HepG2 (cell line): ENCODE measurements at regions of chr2 and their contacts with region 1.

Region 1: DNA sequence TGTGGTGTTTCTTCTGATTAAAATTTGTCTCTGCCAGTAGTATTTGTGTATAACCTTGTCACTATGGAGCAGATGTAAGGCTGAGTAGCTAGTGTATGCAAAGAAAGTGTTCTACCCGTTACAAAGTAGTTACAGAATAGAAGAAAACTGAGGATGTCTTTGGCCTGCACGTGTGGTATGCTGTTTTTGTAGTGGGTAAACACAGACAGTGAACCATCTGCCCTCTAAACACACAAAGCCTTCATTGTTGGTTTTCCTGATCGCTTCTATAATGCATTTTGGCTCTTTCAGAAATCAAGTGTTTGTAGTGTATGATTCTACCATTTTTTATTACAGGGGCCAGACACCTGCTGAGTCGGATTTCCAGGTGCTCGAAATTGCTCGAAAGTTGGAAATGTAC is 61.5 kb downstream of the FARP2 start:
- DNase-seq: peak; percentile 66
- ATAC-seq: peak; percentile 69
- H3K4me3 ChIP-seq: no peak overlapping the region
- H3K27ac ChIP-seq: peak overlapping the region; percentile 10
- H3K4me1 ChIP-seq: peaks cover 47% of the 10 kb centered on the region
- H3K27me3 ChIP-seq: no peaks in the 10 kb centered on the region
- CTCF ChIP-seq: no peak
- EP300 ChIP-seq: no peak; a peak in 1 of 4 replicates
- POLR2A ChIP-seq: no peak
- RAD21 ChIP-seq: no peak

Region 2: DNA sequence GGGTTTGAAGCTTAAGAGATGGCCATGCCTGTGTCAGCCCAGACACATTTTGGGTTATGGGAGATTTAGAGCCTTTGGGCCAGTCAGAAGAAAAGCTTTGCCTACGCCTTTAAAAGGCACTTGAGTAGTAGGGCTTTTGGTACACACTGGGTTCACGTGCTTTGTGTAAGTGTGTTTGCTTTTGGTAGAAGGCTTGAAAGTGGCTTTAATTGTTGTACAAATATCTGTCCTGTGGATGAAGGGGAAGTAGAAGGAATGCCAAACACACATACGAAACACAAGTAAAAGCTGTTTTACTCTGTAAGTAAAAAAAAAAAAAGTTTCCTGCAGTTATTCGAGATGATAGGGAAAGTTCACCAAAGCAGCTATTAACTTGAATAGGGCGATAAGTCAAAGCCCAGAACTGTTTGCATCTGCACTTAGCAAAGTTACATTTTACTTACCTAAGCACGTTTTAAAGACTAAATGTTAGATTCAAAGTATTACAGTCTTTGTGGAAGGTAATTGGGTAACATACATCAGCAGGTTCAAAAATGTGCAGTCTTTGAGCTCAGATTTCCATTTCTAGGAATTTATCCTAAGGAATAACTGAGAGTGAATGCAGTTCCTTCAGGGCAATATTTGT is 15.3 kb after region 1 on chr2:
- CTCF ChIA-PET with region 1: no interaction called
- POLR2A ChIA-PET with region 1: no interaction called
- in situ Hi-C with region 1: no loop called
- intact Hi-C with region 1: loop called (anchors 2 kb)
- DNase-seq: peak; percentile 94
- ATAC-seq: peak; percentile 95
- H3K4me3 ChIP-seq: no peak overlapping the region; a peak in 1 of 6 replicates
- H3K27ac ChIP-seq: peak overlapping the region; percentile 66
- H3K4me1 ChIP-seq: peaks cover 28% of the 10 kb centered on the region
- H3K27me3 ChIP-seq: no peaks in the 10 kb centered on the region
- CTCF ChIP-seq: no peak
- EP300 ChIP-seq: peak in 1 of 2 experiments; percentile 96; a peak in 2 of 4 replicates
- POLR2A ChIP-seq: no peak
- RAD21 ChIP-seq: no peak

Region 3: DNA sequence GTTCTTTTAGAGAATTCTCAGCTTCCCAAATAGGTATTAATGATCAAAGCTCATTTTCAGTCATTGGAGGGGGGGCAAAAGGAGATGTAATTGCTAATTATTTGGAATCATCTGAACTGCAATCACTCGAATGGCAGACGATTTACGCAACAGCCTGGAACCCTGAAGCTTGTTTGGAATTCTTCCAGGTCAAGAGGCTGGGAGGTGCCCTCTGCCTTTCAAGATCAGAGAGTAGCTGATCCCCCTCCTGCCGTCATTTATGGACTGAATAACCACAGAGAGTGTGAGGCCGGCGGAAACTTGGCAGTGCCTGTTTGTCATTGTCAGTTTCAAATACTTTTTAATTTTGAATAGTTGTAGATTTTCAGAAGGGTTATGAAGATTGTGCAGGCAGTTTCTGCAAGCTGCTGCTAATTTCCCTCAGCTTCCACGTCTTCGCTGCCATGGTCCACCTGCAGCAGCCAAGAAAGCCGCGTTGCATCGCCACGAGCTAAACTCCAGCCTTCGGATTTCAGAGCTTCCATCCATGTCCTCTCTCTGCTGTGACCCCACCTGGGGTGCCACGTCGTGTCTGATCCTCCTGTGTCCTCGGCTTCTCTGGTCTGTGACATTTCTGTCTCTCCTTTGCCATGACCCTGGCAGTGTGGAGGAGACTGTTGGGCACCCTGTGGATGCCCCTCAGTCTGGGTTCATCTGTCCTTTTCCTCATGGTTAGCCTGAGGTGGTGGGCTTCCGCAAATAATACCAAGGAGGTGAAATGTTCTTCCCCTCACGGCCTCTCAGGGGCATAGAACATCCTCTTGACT is 558.5 kb after region 1 on chr2:
- CTCF ChIA-PET with region 1: no interaction called
- POLR2A ChIA-PET with region 1: no interaction called
- in situ Hi-C with region 1: no loop called
- intact Hi-C with region 1: no loop called
- DNase-seq: peak; percentile 42
- ATAC-seq: no peak
- H3K4me3 ChIP-seq: no peak overlapping the region
- H3K27ac ChIP-seq: no peak overlapping the region
- H3K4me1 ChIP-seq: peaks cover 13% of the 10 kb centered on the region
- H3K27me3 ChIP-seq: peaks cover 1 to 23% of the 10 kb centered on the region in 2 experiments; a peak in 4 of 5 replicates
- CTCF ChIP-seq: no peak
- EP300 ChIP-seq: no peak
- POLR2A ChIP-seq: no peak
- RAD21 ChIP-seq: no peak